PC-3 (cell line): ENCODE measurements at regions of chr3 and their contacts with region 1.

Region 1: DNA sequence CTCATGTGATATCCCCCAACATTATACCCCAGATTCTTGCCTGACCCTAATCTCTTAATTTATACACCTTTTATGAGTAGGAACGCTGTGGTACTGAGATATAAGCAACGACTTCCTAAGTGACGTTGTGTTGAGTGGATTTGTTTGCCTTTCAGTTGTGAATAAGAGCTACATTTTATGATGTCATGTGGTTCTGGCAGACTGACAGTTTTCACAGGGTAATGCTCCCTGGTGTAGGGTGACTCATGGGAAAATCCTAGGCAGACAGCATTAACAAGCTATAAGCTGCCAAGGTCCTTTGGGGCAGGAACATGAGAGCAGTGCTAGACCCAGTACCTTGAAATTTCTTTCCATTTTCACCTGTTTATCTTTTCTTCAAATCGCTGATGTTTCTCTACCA is 11.2 kb downstream of the C3orf52 start:
- DNase-seq: peak; percentile 100
- ATAC-seq: peak; percentile 92
- H3K4me3 ChIP-seq: no peak overlapping the region
- H3K27ac ChIP-seq: peak overlapping the region; percentile 75
- H3K4me1 ChIP-seq: peaks cover 55% of the 10 kb centered on the region
- H3K27me3 ChIP-seq: no peaks in the 10 kb centered on the region
- CTCF ChIP-seq: no peak

Region 2: DNA sequence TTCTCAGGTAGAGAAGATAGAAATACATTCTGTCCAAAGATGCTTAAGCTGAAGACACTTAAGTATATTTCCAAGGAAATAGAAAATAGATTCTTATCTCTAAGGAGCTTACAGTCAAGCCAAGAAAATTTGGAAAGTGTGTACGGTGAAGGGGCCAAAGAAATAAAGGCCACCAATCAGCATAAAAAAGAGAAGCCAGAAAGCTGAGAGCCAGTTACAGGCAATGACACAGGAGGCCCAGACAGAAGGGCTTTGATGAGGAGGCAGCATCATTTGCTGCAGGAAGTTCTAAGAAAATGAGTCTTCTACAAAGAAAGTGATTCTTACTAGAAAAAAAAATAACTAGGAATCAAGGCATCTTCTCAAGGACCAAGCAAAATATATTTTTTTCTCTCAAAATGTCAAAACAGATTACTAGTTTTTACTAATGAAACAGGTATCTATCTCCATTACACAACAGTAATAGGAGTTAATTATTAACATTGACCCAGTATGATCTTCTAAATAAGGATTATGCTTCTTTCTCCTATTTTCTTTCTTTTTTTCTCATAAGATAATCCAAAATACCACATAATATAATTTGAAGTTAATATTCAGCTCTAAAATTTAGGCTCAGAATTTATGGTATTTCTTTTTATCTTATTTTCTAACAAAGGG is 320.4 kb before region 1 on chr3:
- CTCF ChIA-PET with region 1: interaction called, 10 read pairs
- POLR2A ChIA-PET with region 1: no interaction called
- intact Hi-C with region 1: no loop called
- DNase-seq: no peak
- ATAC-seq: no peak
- H3K4me3 ChIP-seq: no peak overlapping the region
- H3K27ac ChIP-seq: no peak overlapping the region
- H3K4me1 ChIP-seq: peaks cover 23% of the 10 kb centered on the region
- H3K27me3 ChIP-seq: no peaks in the 10 kb centered on the region
- CTCF ChIP-seq: no peak

Region 3: DNA sequence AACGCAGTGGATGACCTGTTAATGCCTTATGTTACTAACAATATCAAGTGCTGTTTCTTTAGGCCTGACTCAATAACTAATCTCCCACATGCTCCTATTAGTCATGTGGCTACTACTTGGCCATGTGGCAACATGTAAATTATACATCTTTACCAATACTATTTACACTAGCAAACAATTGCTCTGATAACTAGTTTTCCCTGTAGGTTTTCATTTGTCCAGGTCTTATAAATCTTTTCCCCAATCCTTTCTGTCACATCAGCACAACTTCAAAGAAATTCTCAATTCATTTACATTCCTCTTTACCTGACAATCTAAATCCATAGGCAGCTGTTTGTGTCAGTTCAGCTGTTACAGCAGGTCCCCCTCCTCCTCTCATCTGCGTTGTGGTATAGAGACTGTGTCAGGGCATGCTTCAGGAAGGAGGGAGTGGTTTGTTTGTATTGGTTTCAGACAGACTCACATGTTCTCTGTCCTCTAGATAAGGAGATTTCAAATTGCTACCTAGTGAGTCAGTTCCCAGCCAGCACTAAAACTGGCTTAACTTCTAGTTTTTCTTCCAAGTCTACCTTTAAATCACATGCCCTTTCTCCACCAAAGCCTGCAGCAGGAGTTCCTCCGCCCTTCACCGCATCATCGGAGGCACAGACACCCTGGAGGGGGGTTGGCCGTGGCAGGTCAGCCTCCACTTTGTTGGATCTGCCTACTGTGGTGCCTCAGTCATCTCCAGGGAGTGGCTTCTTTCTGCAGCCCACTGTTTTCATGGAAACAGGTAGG is 22.5 kb before region 1 on chr3:
- CTCF ChIA-PET with region 1: no interaction called
- POLR2A ChIA-PET with region 1: no interaction called
- intact Hi-C with region 1: loop called (anchors 1 kb)
- DNase-seq: peak; percentile 98
- ATAC-seq: peak; percentile 96
- H3K4me3 ChIP-seq: peak overlapping the region; percentile 60
- H3K27ac ChIP-seq: peak overlapping the region; percentile 99
- H3K4me1 ChIP-seq: peaks cover 36% of the 10 kb centered on the region
- H3K27me3 ChIP-seq: no peaks in the 10 kb centered on the region
- CTCF ChIP-seq: no peak

Region 4: DNA sequence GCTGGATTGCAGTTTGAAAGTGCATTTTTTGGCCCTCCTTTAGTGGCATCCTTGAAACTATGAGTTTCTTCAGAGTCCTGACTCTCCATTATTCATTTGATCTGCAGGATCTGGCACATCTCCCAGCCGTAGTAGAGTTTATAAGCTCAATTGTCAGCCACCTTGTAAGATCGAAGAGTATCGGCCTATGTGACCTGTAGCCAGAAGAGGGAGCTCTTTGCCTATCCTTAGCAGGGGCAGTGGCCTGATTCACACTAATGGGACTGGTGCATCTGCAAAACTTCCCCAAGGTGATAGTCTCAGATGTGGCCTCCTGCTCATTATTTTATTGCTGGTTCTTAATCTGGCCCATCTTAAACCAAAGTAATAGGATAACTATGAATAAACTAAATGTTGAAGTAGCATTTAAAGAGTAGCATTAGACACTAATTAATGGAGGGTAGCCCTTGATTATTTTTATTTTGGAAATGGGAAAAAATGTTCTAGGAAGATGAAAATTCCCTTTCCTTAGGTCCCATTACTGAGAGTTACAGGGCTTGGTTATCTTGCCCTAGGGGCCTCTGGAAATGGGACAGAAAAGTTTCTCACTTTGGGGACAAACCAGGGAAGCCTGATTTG is 14.5 kb after region 1 on chr3:
- CTCF ChIA-PET with region 1: interaction called, 11 read pairs
- POLR2A ChIA-PET with region 1: no interaction called
- intact Hi-C with region 1: no loop called
- DNase-seq: peak; percentile 89
- ATAC-seq: peak; percentile 95
- H3K4me3 ChIP-seq: no peak overlapping the region
- H3K27ac ChIP-seq: no peak overlapping the region
- H3K4me1 ChIP-seq: peaks cover 13% of the 10 kb centered on the region
- H3K27me3 ChIP-seq: no peaks in the 10 kb centered on the region
- CTCF ChIP-seq: peak; percentile 94

Region 5: DNA sequence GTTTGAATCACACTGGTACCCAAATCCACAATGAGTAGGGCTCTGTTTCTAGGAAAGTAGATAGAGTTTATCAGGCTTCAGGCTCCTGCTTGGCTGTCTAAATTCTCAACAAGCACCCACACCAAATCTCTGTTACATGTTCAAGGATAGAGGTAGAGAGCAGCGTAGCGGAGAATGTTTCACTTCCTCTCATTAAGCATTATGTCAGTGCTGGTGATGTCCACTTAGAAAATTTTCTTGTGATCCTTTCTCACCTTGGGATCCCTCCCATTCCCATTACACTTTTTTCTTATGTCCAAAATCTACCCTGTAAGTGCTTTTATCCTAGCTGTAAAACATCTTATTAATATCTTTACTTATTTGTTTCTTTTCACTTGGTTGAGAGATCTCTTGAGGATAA is 70.4 kb after region 1 on chr3:
- CTCF ChIA-PET with region 1: no interaction called
- POLR2A ChIA-PET with region 1: no interaction called
- intact Hi-C with region 1: no loop called
- DNase-seq: no peak
- ATAC-seq: no peak
- H3K4me3 ChIP-seq: no peak overlapping the region
- H3K27ac ChIP-seq: no peak overlapping the region
- H3K4me1 ChIP-seq: no peaks in the 10 kb centered on the region
- H3K27me3 ChIP-seq: no peaks in the 10 kb centered on the region
- CTCF ChIP-seq: no peak